Caco-2 (cell line): ENCODE measurements at regions of chr7 and their contacts with region 1.

Region 1: DNA sequence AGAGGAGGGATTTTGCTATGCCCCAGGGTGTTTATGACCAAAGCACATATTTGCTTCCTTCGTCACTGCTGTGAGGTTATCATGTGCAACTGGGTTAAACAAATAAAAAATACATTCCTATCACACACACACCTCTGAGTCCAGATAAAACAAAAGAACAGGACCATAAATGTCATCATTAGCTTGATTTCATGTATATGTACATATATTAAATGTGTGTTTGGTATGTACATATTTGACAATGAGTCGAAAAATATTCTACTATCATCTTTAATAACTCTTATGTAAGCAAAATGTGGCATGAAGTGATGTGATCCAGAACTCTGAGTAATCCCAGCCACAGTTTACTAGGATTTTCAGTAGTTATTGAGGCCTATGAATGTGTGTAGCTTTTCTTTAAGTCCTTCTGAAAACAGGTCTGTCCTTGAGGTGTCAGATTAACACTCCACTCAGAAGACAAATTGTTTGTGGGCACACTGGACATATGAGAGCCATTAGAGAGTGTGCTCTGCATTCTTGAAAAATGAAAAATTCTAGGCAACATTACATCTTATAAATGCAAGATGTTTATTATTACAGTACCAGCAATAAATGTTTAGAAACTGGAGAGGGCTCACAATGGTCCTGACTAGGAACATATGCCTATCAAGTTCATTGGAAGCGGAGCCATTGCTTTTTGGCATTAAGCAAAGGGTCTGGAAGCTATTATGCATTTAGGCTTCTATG is 335.1 kb upstream of the SEMA3A start:
- DNase-seq: peak; percentile 77 to 81
- H3K4me3 ChIP-seq: no peak overlapping the region
- H3K4me3 Mint-ChIP-seq: no peak overlapping the region
- H3K27ac Mint-ChIP-seq: peak overlapping the region; percentile 56
- H3K4me1 ChIP-seq: peaks cover 31% of the 10 kb centered on the region
- H3K4me1 Mint-ChIP-seq: peaks cover 36% of the 10 kb centered on the region
- H3K27me3 ChIP-seq: no peaks in the 10 kb centered on the region
- H3K27me3 Mint-ChIP-seq: no peaks in the 10 kb centered on the region
- CTCF ChIP-seq: no peak

Region 2: DNA sequence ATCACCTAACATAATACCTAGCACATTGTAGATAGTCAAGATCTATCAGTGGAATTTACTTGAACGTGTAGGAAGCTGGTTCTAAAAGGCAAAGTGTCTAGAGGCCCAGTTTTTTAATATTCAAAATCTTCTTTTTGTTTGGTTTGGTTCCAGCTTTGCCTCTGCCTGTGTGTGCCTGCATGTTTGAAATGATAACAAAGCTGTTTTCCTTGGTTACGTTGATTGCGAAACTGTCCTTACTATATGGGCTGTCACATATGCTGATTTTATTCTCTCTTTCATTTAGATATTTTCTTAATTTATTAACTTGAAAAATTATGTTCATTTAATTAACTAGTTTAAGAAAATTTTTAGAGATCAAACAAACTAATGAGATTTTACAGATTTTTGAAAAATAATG is 572.3 kb before region 1 on chr7:
- CTCF ChIA-PET with region 1: no interaction called
- POLR2A ChIA-PET with region 1: no interaction called
- intact Hi-C with region 1: loop called (anchors 1 kb)
- DNase-seq: peak in 1 of 2 experiments; percentile 21
- H3K4me3 ChIP-seq: no peak overlapping the region
- H3K4me3 Mint-ChIP-seq: no peak overlapping the region
- H3K27ac Mint-ChIP-seq: peak overlapping the region; percentile 43
- H3K4me1 ChIP-seq: peaks cover 22% of the 10 kb centered on the region
- H3K4me1 Mint-ChIP-seq: peaks cover 11% of the 10 kb centered on the region
- H3K27me3 ChIP-seq: no peaks in the 10 kb centered on the region
- H3K27me3 Mint-ChIP-seq: no peaks in the 10 kb centered on the region
- CTCF ChIP-seq: no peak

Region 3: GRCh38 chr7:84177743-84178412 is 351.8 kb before region 1 on chr7:
- CTCF ChIA-PET with region 1: no interaction called
- POLR2A ChIA-PET with region 1: no interaction called
- intact Hi-C with region 1: loop called (anchors 1 kb)
- DNase-seq: peak in 1 of 2 experiments; percentile 24
- H3K4me3 ChIP-seq: no peak overlapping the region
- H3K4me3 Mint-ChIP-seq: no peak overlapping the region
- H3K27ac Mint-ChIP-seq: no peak overlapping the region
- H3K4me1 ChIP-seq: peaks cover 20% of the 10 kb centered on the region
- H3K4me1 Mint-ChIP-seq: no peaks in the 10 kb centered on the region
- H3K27me3 ChIP-seq: no peaks in the 10 kb centered on the region
- H3K27me3 Mint-ChIP-seq: no peaks in the 10 kb centered on the region
- CTCF ChIP-seq: no peak

Region 4: GRCh38 chr7:84232646-84233045 is 297.0 kb before region 1 on chr7:
- CTCF ChIA-PET with region 1: no interaction called
- POLR2A ChIA-PET with region 1: no interaction called
- intact Hi-C with region 1: no loop called
- DNase-seq: no peak
- H3K4me3 ChIP-seq: no peak overlapping the region
- H3K4me3 Mint-ChIP-seq: no peak overlapping the region
- H3K27ac Mint-ChIP-seq: no peak overlapping the region
- H3K4me1 ChIP-seq: peaks cover 3% of the 10 kb centered on the region; the same call in 1 of the 2 replicates
- H3K4me1 Mint-ChIP-seq: peaks cover 10% of the 10 kb centered on the region
- H3K27me3 ChIP-seq: no peaks in the 10 kb centered on the region
- H3K27me3 Mint-ChIP-seq: no peaks in the 10 kb centered on the region
- CTCF ChIP-seq: no peak

Region 5: DNA sequence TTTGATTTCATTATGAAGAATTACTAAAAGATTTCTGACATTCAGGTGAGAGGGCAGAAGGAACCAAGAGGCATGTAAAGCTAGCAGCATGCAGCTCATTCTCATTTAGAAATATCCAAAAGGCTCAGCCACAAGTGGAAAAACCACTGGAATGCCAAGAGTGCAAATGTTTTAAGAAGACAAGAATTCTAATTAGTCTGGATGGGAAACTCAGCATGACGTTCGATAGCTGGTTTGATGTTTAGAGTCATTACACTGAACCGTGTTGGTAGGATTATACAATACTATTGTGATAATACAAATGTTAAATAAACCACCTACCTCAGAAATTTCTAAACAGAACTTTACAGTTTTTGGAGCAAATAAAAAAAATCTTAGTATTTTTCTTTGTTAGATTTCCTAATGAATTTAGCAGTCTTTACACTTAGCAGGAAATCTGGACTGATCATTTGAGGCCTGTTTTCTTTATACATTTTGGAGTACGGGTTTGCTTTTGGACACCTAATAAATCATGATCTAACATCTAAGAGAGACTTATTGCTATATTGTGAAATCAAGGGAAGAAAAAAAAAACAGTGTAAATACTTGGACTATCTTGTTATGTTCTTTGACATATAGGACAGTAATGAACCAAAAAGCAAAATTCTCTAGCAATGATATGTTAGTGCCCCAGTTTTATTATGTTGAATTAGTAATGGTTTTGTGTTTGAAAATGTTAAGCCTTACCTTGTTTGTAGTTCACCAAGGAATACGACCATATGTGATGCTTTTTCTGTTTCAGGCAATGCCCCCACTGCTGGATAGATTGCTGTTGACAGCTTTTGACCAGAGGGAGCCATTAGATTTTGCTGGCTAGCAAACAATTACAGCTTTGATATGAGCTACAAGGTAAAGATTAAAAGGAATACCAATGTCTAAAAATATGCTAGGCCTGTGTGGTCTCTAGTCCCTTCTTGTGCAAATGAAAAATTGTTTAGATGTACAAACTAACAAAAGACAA is 19.0 kb after region 1 on chr7:
- CTCF ChIA-PET with region 1: no interaction called
- POLR2A ChIA-PET with region 1: no interaction called
- intact Hi-C with region 1: no loop called
- DNase-seq: no peak
- H3K4me3 ChIP-seq: no peak overlapping the region
- H3K4me3 Mint-ChIP-seq: no peak overlapping the region
- H3K27ac Mint-ChIP-seq: no peak overlapping the region
- H3K4me1 ChIP-seq: no peaks in the 10 kb centered on the region
- H3K4me1 Mint-ChIP-seq: no peaks in the 10 kb centered on the region
- H3K27me3 ChIP-seq: no peaks in the 10 kb centered on the region; the same call in 1 of the 2 replicates
- H3K27me3 Mint-ChIP-seq: no peaks in the 10 kb centered on the region
- CTCF ChIP-seq: no peak

Region 6: DNA sequence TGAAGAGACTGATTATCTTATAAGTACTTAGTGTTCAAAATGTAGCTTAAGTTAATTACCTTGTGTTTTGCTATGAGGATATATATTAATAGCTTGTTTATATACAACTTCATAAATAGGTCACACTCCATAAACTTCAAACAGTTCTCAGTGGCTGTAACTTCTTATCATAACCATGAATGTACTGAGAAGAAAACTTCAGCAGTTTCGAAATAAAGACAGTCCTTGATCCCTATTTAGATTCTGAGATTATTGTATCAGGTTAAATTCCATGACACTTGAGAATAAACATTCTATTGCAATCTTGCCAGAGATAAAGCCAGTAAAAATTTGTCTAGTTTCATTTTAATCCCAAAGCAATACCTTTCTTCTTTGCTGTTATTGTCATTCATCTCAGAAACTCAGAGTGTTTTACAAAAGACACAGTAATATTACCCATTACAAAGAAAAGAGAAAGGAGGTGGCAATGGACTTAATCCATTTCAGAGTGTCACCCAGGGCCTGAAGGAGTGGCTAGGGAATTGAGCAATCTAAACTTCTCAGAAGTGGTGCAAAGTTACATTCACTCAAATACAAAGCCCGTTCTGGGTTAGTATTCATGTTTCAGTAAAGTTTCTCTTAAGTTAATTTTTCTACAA is 253.6 kb after region 1 on chr7:
- CTCF ChIA-PET with region 1: no interaction called
- POLR2A ChIA-PET with region 1: no interaction called
- intact Hi-C with region 1: loop called (anchors 1 kb)
- DNase-seq: peak; percentile 40 to 52
- H3K4me3 ChIP-seq: no peak overlapping the region
- H3K4me3 Mint-ChIP-seq: no peak overlapping the region
- H3K27ac Mint-ChIP-seq: no peak overlapping the region
- H3K4me1 ChIP-seq: peaks cover 18% of the 10 kb centered on the region
- H3K4me1 Mint-ChIP-seq: no peaks in the 10 kb centered on the region
- H3K27me3 ChIP-seq: no peaks in the 10 kb centered on the region
- H3K27me3 Mint-ChIP-seq: no peaks in the 10 kb centered on the region
- CTCF ChIP-seq: no peak

Region 7: DNA sequence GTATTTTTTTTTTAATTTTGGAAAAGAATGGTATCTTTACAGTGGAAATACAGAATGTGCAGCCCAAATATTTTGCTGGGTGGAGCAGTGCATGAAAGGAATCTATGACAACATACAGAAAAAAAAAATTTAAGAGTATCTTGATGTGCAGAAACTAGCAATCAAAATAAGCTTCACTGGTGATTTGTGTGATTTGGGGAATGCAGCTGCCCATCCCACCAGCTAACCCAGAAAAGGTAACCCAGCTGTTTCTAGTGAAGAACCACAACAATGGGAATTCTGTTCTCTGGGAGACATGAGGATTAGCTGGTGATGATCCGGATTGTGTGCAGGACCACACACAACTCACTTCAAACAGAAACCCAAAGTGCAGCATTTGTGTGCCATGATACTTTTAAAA is 281.7 kb after region 1 on chr7:
- CTCF ChIA-PET with region 1: no interaction called
- POLR2A ChIA-PET with region 1: no interaction called
- intact Hi-C with region 1: no loop called
- DNase-seq: no peak
- H3K4me3 ChIP-seq: no peak overlapping the region
- H3K4me3 Mint-ChIP-seq: no peak overlapping the region
- H3K27ac Mint-ChIP-seq: no peak overlapping the region
- H3K4me1 ChIP-seq: no peaks in the 10 kb centered on the region
- H3K4me1 Mint-ChIP-seq: peaks cover 6% of the 10 kb centered on the region
- H3K27me3 ChIP-seq: no peaks in the 10 kb centered on the region
- H3K27me3 Mint-ChIP-seq: no peaks in the 10 kb centered on the region
- CTCF ChIP-seq: no peak

Region 8: GRCh38 chr7:84914598-84914997 is 385.0 kb after region 1 on chr7:
- CTCF ChIA-PET with region 1: no interaction called
- POLR2A ChIA-PET with region 1: no interaction called
- intact Hi-C with region 1: loop called (anchors 2 kb)
- DNase-seq: peak in 1 of 2 experiments; percentile 45
- H3K4me3 ChIP-seq: no peak overlapping the region
- H3K4me3 Mint-ChIP-seq: no peak overlapping the region
- H3K27ac Mint-ChIP-seq: no peak overlapping the region
- H3K4me1 ChIP-seq: peaks cover 30% of the 10 kb centered on the region
- H3K4me1 Mint-ChIP-seq: peaks cover 22% of the 10 kb centered on the region
- H3K27me3 ChIP-seq: no peaks in the 10 kb centered on the region
- H3K27me3 Mint-ChIP-seq: no peaks in the 10 kb centered on the region
- CTCF ChIP-seq: peak; percentile 26 to 29